ENCODE measurements at regions of chr3 and their contacts with region 1.

Region 1: DNA sequence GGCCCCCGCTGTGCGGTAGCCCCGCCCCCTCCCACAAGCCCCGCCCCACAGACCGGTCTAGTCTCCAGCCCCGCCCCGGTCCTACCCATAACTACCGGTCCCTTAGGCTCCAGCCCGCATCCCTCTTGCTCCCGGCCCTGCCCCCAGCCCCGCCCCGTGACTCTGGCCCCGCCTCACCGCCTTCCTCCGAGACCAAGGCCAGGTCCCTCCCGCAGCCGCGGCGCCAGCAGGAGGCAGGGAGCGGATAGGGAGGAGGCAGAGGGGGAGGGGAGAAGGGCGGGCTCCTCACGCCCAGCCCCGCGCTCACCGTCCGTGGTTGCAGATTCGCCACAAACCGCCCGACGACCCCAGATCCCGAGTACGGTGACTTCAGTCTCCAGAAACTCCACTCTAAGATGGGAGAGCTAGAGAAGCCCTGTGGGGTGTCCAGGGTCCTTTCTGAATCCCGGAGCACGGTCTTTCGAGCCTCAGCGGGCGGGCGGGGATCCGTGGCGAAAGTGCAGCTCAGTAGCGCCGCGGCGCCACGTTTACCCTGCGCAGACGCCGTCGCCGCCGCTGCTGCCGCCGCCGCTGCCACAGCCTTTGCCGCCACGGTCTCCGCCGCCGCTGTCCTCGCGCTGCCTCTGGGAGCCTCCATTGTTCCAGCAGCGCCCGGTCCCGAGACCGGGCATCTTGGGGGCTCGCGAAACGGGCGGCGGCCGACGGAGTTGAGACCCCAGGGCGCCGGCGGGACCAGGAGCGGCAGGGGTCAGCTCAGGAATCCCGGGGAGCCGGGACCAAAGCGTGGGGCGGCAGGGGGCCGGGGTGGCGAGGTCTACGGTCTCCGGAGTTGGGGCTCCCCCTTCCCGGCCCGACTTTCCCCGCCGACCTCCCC is at the start of gene BRPF1:
- DNase-seq: peak; percentile 100
- H3K4me3 Mint-ChIP-seq: peak within 1 kb of the TSS; percentile 88
- H3K27ac Mint-ChIP-seq: peak within 1 kb of the TSS; percentile 96
- H3K4me1 Mint-ChIP-seq: peaks cover 72% of the 10 kb centered on the region
- H3K27me3 Mint-ChIP-seq: no peaks in the 10 kb centered on the region
- total RNA-seq, gene BRPF1: 25.0 to 27.3 TPM

Region 2: DNA sequence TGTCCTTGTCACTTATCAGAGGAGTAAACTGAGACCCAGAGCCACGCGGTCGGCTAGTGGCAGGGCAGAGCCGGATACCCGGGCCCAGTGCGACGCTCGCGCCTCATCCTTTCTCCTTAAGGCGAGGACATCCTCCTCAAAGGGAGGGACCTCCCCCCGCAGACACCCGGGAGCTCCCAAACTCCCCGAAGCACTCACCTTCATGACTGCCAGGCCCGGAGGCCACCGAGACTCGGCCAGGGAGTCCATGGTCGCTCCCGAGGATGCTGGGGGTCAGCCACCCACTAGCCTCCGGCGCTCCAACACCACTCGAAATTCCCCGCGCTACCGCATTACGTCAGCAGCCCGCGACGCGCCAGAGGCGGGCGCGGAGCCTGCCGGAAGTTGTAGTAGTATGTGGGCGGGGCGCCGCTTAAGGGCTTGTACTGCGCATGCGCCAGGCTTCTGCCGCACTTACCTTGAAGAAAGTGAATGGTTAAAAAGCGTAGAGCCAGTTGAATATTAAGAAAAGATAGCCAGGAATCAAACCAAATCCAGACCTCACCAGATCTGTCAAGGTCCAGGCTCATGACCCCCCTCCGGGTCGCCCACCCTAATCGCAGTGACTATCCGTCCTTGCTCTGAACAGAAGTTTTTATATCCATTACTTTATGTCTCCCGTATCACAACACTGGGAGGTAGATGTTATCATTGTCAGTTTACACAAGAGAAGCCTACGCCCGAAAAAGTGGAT is 768.1 kb before region 1 on chr3 and contains the start of gene RAD18:
- CTCF ChIA-PET with region 1: no interaction called
- POLR2A ChIA-PET with region 1: no interaction called
- intact Hi-C with region 1: loop called (anchors 1 kb)
- DNase-seq: peak; percentile 95
- H3K4me3 Mint-ChIP-seq: peak within 1 kb of the TSS; percentile 97
- H3K27ac Mint-ChIP-seq: peak within 1 kb of the TSS; percentile 93
- H3K4me1 Mint-ChIP-seq: peaks cover 27% of the 10 kb centered on the region
- H3K27me3 Mint-ChIP-seq: no peaks in the 10 kb centered on the region
- total RNA-seq, gene RAD18: 38.1 to 41.9 TPM

Region 3: DNA sequence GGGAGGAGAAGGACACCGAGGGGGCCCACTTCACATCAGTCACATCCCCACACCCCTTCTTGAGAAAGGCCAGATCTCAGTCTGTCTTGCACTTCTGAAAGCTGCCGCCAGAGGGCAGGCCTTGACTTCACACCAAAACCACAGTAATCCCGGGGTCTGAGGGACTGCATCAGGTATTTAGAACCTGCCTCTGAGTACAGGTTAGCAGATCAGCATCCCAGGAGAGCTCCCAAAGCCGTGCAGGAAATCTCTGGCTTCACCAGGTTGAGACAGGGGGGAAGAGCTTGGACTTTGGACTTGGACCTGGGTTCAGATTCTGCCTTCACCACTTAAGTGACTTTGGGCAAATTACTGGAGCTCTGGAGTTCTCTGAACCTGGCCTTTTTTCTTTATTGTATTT is 228.2 kb before region 1 on chr3:
- CTCF ChIA-PET with region 1: interaction called, 13 read pairs
- POLR2A ChIA-PET with region 1: no interaction called
- intact Hi-C with region 1: loop called (anchors 2 kb)
- DNase-seq: peak; percentile 83
- H3K4me3 Mint-ChIP-seq: no peak overlapping the region
- H3K27ac Mint-ChIP-seq: no peak overlapping the region
- H3K4me1 Mint-ChIP-seq: peaks cover 7% of the 10 kb centered on the region
- H3K27me3 Mint-ChIP-seq: peaks cover 31% of the 10 kb centered on the region

Region 4: DNA sequence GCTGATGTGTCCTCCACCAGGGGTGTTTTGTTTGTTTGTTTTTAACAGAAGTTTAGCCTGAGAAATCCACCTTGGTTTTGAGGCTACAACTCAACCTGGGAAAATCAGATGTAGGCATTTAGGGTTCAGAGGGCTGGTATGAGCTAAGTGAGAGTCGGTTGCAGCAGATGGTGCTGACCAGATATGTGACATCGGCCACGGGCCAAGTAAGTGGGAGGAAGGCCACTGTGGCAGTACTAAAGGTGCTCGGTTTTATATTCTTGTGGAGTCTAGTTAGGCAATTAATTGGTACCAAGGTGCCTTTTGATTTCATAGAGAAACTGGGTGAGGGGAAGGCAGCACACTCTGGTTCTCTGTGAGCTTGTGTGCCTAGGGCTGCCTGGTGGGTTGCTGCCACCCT is 71.6 kb before region 1 on chr3:
- CTCF ChIA-PET with region 1: no interaction called
- POLR2A ChIA-PET with region 1: no interaction called
- intact Hi-C with region 1: no loop called
- DNase-seq: no peak
- H3K4me3 Mint-ChIP-seq: no peak overlapping the region
- H3K27ac Mint-ChIP-seq: no peak overlapping the region
- H3K4me1 Mint-ChIP-seq: no peaks in the 10 kb centered on the region
- H3K27me3 Mint-ChIP-seq: no peaks in the 10 kb centered on the region

Region 5: GRCh38 chr3:9692416-9692815 is 39.0 kb before region 1 on chr3:
- CTCF ChIA-PET with region 1: interaction called, 10 read pairs
- POLR2A ChIA-PET with region 1: no interaction called
- intact Hi-C with region 1: no loop called
- DNase-seq: no peak
- H3K4me3 Mint-ChIP-seq: no peak overlapping the region
- H3K27ac Mint-ChIP-seq: no peak overlapping the region
- H3K4me1 Mint-ChIP-seq: no peaks in the 10 kb centered on the region
- H3K27me3 Mint-ChIP-seq: no peaks in the 10 kb centered on the region

Region 6: GRCh38 chr3:9779721-9780457 is 48.4 kb after region 1 on chr3:
- CTCF ChIA-PET with region 1: interaction called, 6 read pairs
- POLR2A ChIA-PET with region 1: interaction called, 9 read pairs
- intact Hi-C with region 1: loop called (anchors 1 kb)
- DNase-seq: peak; percentile 62
- H3K4me3 Mint-ChIP-seq: peak overlapping the region; percentile 39
- H3K27ac Mint-ChIP-seq: peak overlapping the region; percentile 93
- H3K4me1 Mint-ChIP-seq: peaks cover 62% of the 10 kb centered on the region
- H3K27me3 Mint-ChIP-seq: no peaks in the 10 kb centered on the region

Region 7: GRCh38 chr3:9902372-9903237 is 171.2 kb after region 1 on chr3 and contains the start of gene IL17RE:
- CTCF ChIA-PET with region 1: no interaction called
- POLR2A ChIA-PET with region 1: no interaction called
- intact Hi-C with region 1: no loop called
- DNase-seq: no peak
- H3K4me3 Mint-ChIP-seq: peak within 1 kb of the TSS; percentile 44
- H3K27ac Mint-ChIP-seq: peak within 1 kb of the TSS; percentile 78
- H3K4me1 Mint-ChIP-seq: peaks cover 27% of the 10 kb centered on the region
- H3K27me3 Mint-ChIP-seq: no peaks in the 10 kb centered on the region
- total RNA-seq, gene IL17RE: 1.8 to 1.9 TPM

Measured in activated CD4-positive, alpha-beta memory T cell treated with anti-CD3 and anti-CD28 coated beads for 36 hours (primary cell).